ENCODE measurements at regions of chr1 and their contacts with region 1.

Region 1: GRCh38 chr1:201381112-201381511 is 3.6 kb upstream of the TNNT2 start:
- DNase-seq: no peak
- H3K4me3 ChIP-seq: no peak overlapping the region
- H3K27ac ChIP-seq: no peak overlapping the region
- H3K4me1 ChIP-seq: no peaks in the 10 kb centered on the region
- H3K27me3 ChIP-seq: no peaks in the 10 kb centered on the region
- CTCF ChIP-seq: no peak

Region 2: GRCh38 chr1:200780545-200781369 is 600.4 kb before region 1 on chr1:
- CTCF ChIA-PET with region 1: interaction called, 14 read pairs
- POLR2A ChIA-PET with region 1: no interaction called
- intact Hi-C with region 1: no loop called
- DNase-seq: no peak
- H3K4me3 ChIP-seq: no peak overlapping the region
- H3K27ac ChIP-seq: no peak overlapping the region
- H3K4me1 ChIP-seq: peaks cover 11% of the 10 kb centered on the region
- H3K27me3 ChIP-seq: no peaks in the 10 kb centered on the region
- CTCF ChIP-seq: no peak